ENCODE measurements at regions of chr12 and their contacts with region 1.

Region 1: DNA sequence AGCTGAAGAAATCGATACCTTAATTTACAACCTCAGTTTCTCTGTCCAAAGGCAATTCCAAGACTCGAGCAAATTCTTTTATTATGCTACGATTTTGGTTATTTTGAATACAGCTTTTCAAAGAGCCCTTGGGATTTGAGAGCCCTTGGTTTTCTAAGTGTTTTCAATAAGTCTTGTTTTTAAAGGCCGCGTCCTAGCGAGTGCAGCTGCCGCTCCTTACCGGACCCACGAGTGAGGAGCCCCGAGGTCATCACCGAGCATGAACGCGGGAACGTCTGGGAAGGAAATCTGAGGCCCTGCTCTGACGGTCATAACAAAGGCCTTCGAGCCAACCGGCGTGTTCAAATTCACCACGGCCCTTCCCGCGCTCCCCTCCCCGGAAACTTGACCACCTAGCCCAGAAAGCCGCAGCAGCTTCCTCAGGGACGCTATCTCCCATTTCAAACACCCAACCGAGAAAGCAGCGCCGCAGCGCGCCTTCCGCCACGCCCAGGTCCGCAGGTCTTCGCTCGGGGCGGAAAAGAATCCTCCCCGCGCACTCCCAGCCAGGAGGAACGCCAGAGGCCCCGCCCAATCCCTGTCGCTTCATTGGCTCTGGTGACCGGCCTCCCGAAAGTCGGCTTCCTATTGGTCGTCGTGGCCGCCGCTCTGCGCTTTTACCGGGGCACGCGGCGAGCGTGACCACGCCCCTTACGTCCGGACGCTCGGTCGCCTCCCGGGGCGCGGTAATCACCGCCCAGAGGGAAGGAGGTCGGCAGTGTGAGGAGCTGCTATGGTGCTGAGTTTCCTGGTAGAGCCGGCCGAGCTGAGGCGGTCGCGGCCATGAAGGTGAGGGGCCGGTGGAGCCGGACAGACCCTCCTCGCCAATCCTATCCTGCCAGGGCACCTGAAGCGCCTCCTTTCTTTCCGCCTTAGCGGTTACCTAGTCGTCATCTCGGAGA is at the start of gene RNF34:
- DNase-seq: peak; percentile 99
- H3K4me3 ChIP-seq: peak within 1 kb of the TSS; percentile 69 to 98 (median 91)
- H3K27ac ChIP-seq: peak within 1 kb of the TSS; percentile 81 to 98 (median 96)
- H3K4me1 ChIP-seq: peaks cover 22 to 53% (median 39%) of the 10 kb centered on the region in 6 donors
- H3K27me3 ChIP-seq: no peaks in the 10 kb centered on the region
- CTCF ChIP-seq: peak in 5 of 11 experiments; percentile 13 to 41 (median 18)
- POLR2A ChIP-seq: peak; percentile 70 to 95 (median 95)
- total RNA-seq, gene RNF34: 47.3 to 62.6 (median 57.5) TPM

Region 2: DNA sequence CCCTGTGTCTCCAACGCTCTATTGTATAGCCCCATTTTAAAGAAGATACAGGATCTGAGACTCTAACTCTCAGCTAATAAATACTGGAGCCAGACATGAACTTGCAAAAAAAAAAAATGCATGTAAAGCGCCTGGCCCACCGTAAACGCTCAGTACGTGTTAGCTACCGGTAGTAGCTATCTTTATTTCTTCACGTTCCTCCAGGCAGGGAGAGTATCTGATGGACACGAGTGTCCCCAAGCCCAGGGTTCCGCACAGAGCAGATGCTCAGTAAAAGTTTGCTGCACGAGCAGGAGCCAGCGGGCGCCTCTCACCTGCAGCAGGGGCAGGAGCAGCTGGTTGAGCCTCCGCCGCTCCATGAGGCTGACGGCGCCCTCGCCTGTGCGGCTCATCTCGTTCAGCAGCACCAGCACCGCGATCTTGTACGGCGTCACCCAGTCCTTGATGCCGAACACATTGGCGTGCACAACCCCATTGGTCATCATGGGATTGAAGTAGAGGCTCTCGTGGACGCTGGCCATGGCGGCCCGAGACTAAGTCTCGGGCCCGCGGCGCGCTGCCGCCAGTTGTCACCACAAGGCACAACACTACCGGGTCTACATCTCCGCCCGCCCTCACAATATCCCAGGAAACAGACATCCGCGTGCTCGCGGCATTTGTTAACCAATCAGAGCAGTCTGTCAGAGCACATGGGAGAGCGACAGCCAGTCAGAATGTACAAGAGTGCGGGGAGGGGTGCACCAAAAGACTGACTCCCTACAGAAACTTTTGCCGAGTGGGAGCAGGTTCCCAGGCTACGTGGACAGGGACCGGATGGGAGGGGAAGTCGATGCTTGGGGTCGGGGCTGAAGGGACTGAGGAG is 47.6 kb before region 1 on chr12 and contains the start of gene ANAPC5:
- intact Hi-C with region 1: loop called (anchors 5 kb)
- DNase-seq: peak; percentile 95
- H3K4me3 ChIP-seq: peak within 1 kb of the TSS; percentile 75 to 99 (median 89)
- H3K27ac ChIP-seq: peak within 1 kb of the TSS; percentile 75 to 91 (median 84)
- H3K4me1 ChIP-seq: peaks cover 12 to 58% (median 32%) of the 10 kb centered on the region in 6 donors
- H3K27me3 ChIP-seq: no peaks in the 10 kb centered on the region
- CTCF ChIP-seq: peak in 6 of 11 experiments; percentile 12 to 51 (median 40)
- POLR2A ChIP-seq: peak in 1 of 3 donors; percentile 79
- total RNA-seq, gene ANAPC5: 97.5 to 162 (median 139) TPM